Cardiac septum (tissue), 1 donor: ENCODE measurements at regions of chr4 and their contacts with region 1.

Region 1: DNA sequence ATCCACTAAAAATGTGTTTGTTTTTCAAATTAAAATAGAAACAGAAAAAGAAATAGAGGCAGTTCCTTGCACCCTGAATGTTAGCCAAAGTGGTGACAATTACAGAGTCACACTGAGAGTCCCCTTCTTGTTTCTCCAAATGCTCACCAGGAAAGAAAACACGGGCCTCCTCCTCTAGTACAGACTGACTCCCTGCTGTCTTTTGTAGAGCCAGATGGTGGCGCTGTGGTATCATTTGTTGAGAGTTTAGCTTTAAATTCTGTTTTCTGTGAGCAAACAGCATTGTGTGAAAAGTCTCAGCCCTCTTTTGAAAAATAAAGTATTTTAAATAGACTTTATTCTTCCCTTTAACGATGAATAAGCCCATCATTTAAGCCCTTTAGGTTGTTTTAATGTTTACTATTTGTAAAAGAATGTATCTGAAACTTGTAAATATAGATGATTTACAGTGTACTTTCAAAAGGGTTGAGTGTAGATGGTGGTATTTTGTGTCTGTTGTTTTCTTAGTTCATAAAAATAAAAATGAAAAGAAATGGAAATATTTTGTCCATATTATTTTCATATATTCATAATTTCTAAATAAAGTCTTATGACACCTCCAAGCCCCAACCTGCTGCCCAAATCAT is 36.9 kb upstream of the ATOH1 start:
- DNase-seq: no peak

Region 2: GRCh38 chr4:94068753-94069719 is 277.4 kb after region 1 on chr4:
- intact Hi-C with region 1: no loop called
- DNase-seq: no peak

Region 3: GRCh38 chr4:94127707-94128328 is 336.1 kb after region 1 on chr4:
- intact Hi-C with region 1: loop called (anchors 5 kb)
- DNase-seq: no peak

Region 4: GRCh38 chr4:94256828-94257227 is 465.1 kb after region 1 on chr4:
- intact Hi-C with region 1: loop called (anchors 5 kb)
- DNase-seq: no peak